Panc1 (cell line): ENCODE measurements at regions of chr11 and their contacts with region 1.

Region 1: DNA sequence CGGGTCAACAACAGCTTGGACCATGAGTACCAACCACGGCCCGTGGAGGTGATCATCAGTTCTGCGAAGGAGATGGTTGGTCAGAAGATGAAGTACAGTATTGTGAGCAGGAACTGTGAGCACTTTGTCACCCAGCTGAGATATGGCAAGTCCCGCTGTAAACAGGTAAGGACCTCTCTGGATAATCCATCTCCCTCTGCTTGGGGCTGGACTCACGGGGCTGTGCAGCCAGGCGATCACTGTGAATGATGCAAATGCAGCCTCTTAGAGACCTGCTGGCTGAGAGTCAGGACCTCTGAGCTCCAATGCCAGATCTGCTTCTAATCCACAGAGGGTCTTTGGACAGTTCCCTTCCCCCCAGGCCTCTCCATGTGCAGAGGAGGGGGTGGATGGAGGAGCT is 8.1 kb downstream of the PLAAT4 start:
- DNase-seq: no peak
- ATAC-seq: peak; percentile 21; the same call in 1 of the 2 replicates
- H3K4me3 ChIP-seq: no peak overlapping the region
- H3K27ac ChIP-seq: no peak overlapping the region
- H3K4me1 ChIP-seq: no peaks in the 10 kb centered on the region
- H3K27me3 ChIP-seq: peaks cover 3% of the 10 kb centered on the region; the same call in 1 of the 2 replicates
- CTCF ChIP-seq: no peak

Region 2: DNA sequence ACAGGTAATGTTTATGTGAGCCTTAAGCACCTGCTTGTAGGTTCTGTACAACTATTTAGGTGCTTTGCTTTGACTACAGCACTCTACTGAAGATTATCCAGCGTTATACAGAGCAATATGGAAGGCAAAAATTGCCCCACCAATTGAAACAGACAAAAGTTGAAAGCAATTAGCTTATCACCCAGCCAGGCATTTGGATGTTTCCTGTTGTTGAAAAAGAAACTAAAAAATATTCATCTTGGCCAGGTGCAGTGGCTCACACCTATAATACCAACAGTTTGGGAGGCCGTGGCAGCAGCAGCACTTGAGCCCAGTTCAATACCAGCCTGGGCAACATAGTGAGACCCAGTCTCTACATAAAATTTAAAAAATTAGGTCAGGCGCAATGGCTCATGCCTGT is 107.9 kb after region 1 on chr11:
- CTCF ChIA-PET with region 1: no interaction called
- POLR2A ChIA-PET with region 1: interaction called, 11 read pairs
- in situ Hi-C with region 1: no loop called
- intact Hi-C with region 1: no loop called
- DNase-seq: no peak
- ATAC-seq: no peak
- H3K4me3 ChIP-seq: no peak overlapping the region
- H3K27ac ChIP-seq: no peak overlapping the region
- H3K4me1 ChIP-seq: no peaks in the 10 kb centered on the region
- H3K27me3 ChIP-seq: no peaks in the 10 kb centered on the region
- CTCF ChIP-seq: no peak